ENCODE measurements at regions of chr1 and their contacts with region 1.

Region 1: GRCh38 chr1:169711469-169712281 is at the start of gene SELL:
- DNase-seq: peak; percentile 50
- ATAC-seq: peak; percentile 93
- H3K4me3 ChIP-seq: no peak within 1 kb of the TSS; a peak in 2 of 4 replicates
- H3K27ac ChIP-seq: no peak within 1 kb of the TSS
- H3K4me1 ChIP-seq: no peaks in the 10 kb centered on the region
- H3K27me3 ChIP-seq: peaks cover 7% of the 10 kb centered on the region
- CTCF ChIP-seq: peak; percentile 83
- total RNA-seq, gene SELL: 0.31 TPM

Region 2: DNA sequence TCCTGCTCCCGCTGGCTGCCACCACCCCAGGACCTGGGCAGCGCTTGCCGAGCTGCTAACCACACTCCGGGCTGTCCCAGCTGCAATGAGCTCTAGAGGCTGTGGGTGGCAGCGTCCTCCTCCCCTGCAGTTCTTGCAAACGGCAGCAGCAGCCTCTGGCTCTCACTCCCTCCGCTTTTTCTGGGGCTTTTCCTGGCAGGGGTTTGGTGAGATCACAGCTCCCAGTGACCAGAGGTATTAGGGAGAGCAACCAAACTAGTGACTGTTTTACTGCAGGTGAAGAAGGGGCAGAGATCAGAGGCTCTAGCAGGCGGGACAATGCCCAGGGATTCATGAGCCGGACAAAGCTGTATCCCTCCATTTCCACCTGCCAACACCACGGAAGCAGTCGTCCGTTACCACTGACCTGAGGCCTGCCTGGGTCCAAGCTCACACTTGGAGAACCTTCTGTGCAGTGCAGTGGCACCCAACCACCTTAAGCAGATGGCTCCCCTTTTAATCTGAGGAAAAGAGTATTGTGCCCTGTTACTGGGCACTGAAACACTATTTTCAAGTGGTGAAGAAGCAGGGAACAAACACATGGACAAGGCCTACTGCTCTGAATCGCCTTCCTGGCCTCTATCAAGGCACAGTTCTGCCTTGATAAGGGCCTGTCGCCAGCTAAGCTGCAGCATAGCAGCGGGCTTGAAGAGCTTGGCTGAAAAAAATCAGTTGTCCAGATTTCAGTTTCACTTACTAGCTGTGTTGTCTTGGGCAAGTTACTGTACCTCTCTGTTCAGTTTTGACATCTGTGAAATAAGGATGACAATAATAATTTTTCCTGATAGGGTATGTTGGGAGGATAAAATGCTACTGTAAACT is 125.0 kb before region 1 on chr1 and contains the start of gene F5:
- CTCF ChIA-PET with region 1: interaction called, 5 read pairs
- POLR2A ChIA-PET with region 1: no interaction called
- in situ Hi-C with region 1: no loop called
- intact Hi-C with region 1: loop called (anchors 5 kb)
- DNase-seq: peak; percentile 32
- ATAC-seq: peak; percentile 100
- H3K4me3 ChIP-seq: peak within 1 kb of the TSS; percentile 7 to 35; a peak in 3 of 4 replicates
- H3K27ac ChIP-seq: no peak within 1 kb of the TSS
- H3K4me1 ChIP-seq: peaks cover 10% of the 10 kb centered on the region; the same call in 1 of the 2 replicates
- H3K27me3 ChIP-seq: peaks cover 24% of the 10 kb centered on the region
- CTCF ChIP-seq: peak; percentile 76
- total RNA-seq, gene F5: 0.08 TPM

Region 3: DNA sequence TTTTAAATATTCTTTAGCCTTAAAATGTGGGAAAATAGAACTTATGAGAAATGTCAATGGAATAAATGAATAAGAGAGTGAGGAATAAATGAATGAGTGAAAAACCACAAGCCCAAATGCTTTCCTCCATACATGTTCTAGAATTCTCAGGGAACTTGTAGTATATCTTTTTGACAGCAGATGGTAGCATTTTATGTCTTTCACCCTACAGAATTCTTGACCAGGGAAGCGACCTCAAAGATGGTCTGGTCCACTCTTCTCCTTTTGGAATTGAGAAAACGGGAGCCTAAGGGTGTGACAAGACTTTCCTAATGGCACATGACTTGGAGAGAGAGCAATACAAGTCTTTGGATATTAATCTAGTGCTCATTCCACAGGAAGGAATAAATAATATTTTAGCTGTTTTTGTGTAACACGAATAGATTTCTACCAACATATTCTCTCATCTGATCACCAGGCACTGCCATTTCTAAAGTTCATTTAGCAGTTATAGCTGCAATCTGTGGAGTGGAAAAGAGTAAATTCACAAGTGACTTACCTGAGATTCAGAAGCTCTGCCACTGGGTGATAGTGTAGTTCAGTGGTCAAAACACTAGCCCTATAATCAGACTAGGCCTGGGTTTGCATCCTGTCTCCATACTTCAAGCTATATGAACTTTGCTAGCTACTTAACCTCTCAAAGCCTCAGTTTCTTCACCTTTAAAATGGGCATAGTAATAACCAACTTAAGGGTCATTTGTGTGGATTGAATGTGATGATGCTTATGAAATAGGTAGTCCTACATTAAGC is 110.4 kb before region 1 on chr1:
- CTCF ChIA-PET with region 1: interaction called, 11 read pairs
- POLR2A ChIA-PET with region 1: no interaction called
- in situ Hi-C with region 1: no loop called
- intact Hi-C with region 1: loop called (anchors 2 kb)
- DNase-seq: no peak
- ATAC-seq: no peak
- H3K4me3 ChIP-seq: no peak overlapping the region
- H3K27ac ChIP-seq: no peak overlapping the region
- H3K4me1 ChIP-seq: no peaks in the 10 kb centered on the region
- H3K27me3 ChIP-seq: no peaks in the 10 kb centered on the region; the same call in 1 of the 2 replicates
- CTCF ChIP-seq: peak; percentile 48; the same call in 1 of the 2 replicates

Region 4: DNA sequence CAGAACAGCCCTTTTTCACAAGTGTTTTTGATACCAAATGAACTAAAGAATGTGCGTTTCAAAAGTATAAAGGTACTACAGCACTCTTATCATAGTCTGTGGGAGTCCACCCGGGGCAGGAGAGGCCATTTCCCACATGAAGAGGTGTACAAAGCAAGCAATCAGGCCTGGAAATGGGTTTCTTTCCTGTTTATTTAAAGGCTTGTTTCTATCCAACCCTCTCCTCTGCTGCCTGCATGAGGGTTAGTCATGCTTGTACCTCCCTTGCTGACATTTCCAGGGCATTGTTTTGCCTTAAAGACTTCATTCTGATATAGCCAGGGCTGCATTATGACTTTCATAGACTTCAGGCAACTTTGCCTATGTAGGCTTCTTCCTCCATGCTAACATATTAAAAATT is 93.3 kb before region 1 on chr1:
- CTCF ChIA-PET with region 1: no interaction called
- POLR2A ChIA-PET with region 1: no interaction called
- in situ Hi-C with region 1: no loop called
- intact Hi-C with region 1: no loop called
- DNase-seq: no peak
- ATAC-seq: no peak
- H3K4me3 ChIP-seq: no peak overlapping the region
- H3K27ac ChIP-seq: no peak overlapping the region
- H3K4me1 ChIP-seq: no peaks in the 10 kb centered on the region
- H3K27me3 ChIP-seq: 0 out of 2 replicates have a peak, but pooled peaks cover 5% of the 10 kb centered on the region
- CTCF ChIP-seq: no peak